A549 (cell line): ENCODE measurements at regions of chr15 and their contacts with region 1.

Region 1: DNA sequence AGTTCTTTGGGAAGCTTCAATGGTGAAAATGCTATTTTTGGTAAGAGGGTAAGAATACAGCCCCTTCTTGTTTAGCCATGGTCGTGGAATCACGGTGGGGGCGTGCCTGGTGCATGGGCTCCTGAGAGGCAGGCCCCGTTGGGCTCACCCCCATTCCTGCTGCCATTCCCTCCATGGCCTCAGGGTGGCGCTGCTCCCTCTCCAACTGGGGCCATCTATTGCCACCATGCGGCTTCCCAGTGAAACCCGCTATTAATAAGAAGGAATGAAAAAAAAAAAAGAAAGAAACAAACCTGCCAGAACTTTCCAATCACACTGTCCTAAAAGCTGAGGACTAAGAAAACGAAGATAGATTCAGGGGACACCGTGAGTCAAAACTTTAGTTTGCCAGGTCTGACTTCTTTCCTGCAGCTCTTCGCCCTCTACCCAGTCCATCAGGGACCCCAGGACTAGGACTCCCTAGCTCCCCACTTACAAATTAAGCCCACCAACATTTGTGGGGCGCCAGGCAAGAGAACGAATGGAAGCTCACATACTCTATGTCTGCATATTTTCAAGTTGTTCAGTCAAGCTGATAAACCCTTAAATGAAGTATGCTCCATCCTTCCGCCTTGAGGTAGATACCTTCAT is 30.6 kb upstream of the ABHD2 start:
- DNase-seq: peak; percentile 80 to 91
- ATAC-seq: peak; percentile 93 to 97
- H3K4me3 ChIP-seq: no peak overlapping the region
- H3K27ac ChIP-seq: peak overlapping the region; percentile 55 to 57; a peak in 5 of 6 replicates
- H3K4me1 ChIP-seq: peaks cover 6% of the 10 kb centered on the region; the same call in 1 of the 3 replicates
- CTCF ChIP-seq: peak; percentile 100
- EP300 ChIP-seq: no peak
- POLR2A ChIP-seq: no peak
- RAD21 ChIP-seq: peak; percentile 100

Region 2: GRCh38 chr15:88638626-88639372 is 418.8 kb before region 1 on chr15 and contains the start of gene ISG20:
- CTCF ChIA-PET with region 1: no interaction called
- POLR2A ChIA-PET with region 1: no interaction called
- DNase-seq: peak; percentile 98 to 100
- ATAC-seq: peak; percentile 80 to 92
- H3K4me3 ChIP-seq: peak within 1 kb of the TSS; percentile 31
- H3K27ac ChIP-seq: peak within 1 kb of the TSS; percentile 87 to 92
- H3K4me1 ChIP-seq: peaks cover 55% of the 10 kb centered on the region
- CTCF ChIP-seq: peak; percentile 44
- EP300 ChIP-seq: peak; percentile 61 to 83; a peak in 3 of 5 replicates
- POLR2A ChIP-seq: no peak
- RAD21 ChIP-seq: peak; percentile 10 to 51; a peak in 4 of 5 replicates
- polyA plus RNA-seq, gene ISG20: 47.4 and 65.8 TPM in 2 replicates

Region 3: GRCh38 chr15:88704791-88705768 is 352.5 kb before region 1 on chr15:
- CTCF ChIA-PET with region 1: no interaction called
- POLR2A ChIA-PET with region 1: no interaction called
- DNase-seq: no peak
- ATAC-seq: peak in 1 of 2 experiments; percentile 15; a peak in 2 of 6 replicates
- H3K4me3 ChIP-seq: peak overlapping the region; percentile 36
- H3K27ac ChIP-seq: peak overlapping the region in 1 of 2 experiments; percentile 61; a peak in 3 of 6 replicates
- H3K4me1 ChIP-seq: no peaks in the 10 kb centered on the region
- CTCF ChIP-seq: no peak
- EP300 ChIP-seq: no peak
- POLR2A ChIP-seq: no peak
- RAD21 ChIP-seq: no peak

Region 4: GRCh38 chr15:88878720-88879184 is 178.9 kb before region 1 on chr15:
- CTCF ChIA-PET with region 1: interaction called, 11 read pairs
- POLR2A ChIA-PET with region 1: no interaction called
- DNase-seq: peak; percentile 68 to 87
- ATAC-seq: peak; percentile 91 to 95
- H3K4me3 ChIP-seq: no peak overlapping the region
- H3K27ac ChIP-seq: no peak overlapping the region
- H3K4me1 ChIP-seq: no peaks in the 10 kb centered on the region
- CTCF ChIP-seq: peak; percentile 78
- EP300 ChIP-seq: no peak
- POLR2A ChIP-seq: no peak
- RAD21 ChIP-seq: peak; percentile 70 to 82

Region 5: GRCh38 chr15:89026167-89026566 is 31.5 kb before region 1 on chr15:
- CTCF ChIA-PET with region 1: interaction called, 24 read pairs
- POLR2A ChIA-PET with region 1: no interaction called
- DNase-seq: no peak
- ATAC-seq: no peak
- H3K4me3 ChIP-seq: no peak overlapping the region
- H3K27ac ChIP-seq: no peak overlapping the region
- H3K4me1 ChIP-seq: no peaks in the 10 kb centered on the region
- CTCF ChIP-seq: no peak
- EP300 ChIP-seq: no peak
- POLR2A ChIP-seq: no peak
- RAD21 ChIP-seq: no peak

Region 6: DNA sequence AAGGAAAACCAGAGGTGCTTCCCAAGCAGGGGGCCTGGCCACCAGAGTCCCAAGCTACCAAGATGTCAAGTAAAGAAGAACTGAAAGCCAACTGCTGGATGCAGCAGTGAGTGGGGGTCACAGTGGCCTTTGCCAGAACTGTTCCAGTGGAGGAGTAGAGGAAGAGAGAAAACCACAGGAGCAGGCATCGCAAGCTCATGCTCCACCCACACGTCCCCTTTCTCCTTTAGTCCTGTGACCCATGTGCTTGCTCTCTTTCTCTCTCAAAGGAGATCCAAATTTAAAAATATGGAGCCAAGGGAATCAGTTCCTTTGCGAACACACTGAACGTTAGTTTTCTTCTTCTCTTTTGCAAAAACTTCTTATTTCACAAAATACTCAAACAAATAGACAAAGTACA is 18.2 kb after region 1 on chr15:
- CTCF ChIA-PET with region 1: interaction called, 47 read pairs
- POLR2A ChIA-PET with region 1: no interaction called
- DNase-seq: no peak
- ATAC-seq: no peak
- H3K4me3 ChIP-seq: no peak overlapping the region
- H3K27ac ChIP-seq: no peak overlapping the region
- H3K4me1 ChIP-seq: 0 out of 3 replicates have a peak, but pooled peaks cover 3% of the 10 kb centered on the region
- CTCF ChIP-seq: no peak
- EP300 ChIP-seq: no peak
- POLR2A ChIP-seq: no peak
- RAD21 ChIP-seq: no peak

Region 7: GRCh38 chr15:89129123-89129815 is 71.7 kb after region 1 on chr15:
- CTCF ChIA-PET with region 1: interaction called, 380 read pairs
- POLR2A ChIA-PET with region 1: no interaction called
- DNase-seq: peak; percentile 63 to 68
- ATAC-seq: peak; percentile 60 to 79; a peak in 3 of 6 replicates
- H3K4me3 ChIP-seq: no peak overlapping the region
- H3K27ac ChIP-seq: peak overlapping the region; percentile 69 to 74
- H3K4me1 ChIP-seq: peaks cover 57% of the 10 kb centered on the region
- CTCF ChIP-seq: peak; percentile 95
- EP300 ChIP-seq: no peak
- POLR2A ChIP-seq: no peak
- RAD21 ChIP-seq: peak; percentile 84 to 86

Region 8: DNA sequence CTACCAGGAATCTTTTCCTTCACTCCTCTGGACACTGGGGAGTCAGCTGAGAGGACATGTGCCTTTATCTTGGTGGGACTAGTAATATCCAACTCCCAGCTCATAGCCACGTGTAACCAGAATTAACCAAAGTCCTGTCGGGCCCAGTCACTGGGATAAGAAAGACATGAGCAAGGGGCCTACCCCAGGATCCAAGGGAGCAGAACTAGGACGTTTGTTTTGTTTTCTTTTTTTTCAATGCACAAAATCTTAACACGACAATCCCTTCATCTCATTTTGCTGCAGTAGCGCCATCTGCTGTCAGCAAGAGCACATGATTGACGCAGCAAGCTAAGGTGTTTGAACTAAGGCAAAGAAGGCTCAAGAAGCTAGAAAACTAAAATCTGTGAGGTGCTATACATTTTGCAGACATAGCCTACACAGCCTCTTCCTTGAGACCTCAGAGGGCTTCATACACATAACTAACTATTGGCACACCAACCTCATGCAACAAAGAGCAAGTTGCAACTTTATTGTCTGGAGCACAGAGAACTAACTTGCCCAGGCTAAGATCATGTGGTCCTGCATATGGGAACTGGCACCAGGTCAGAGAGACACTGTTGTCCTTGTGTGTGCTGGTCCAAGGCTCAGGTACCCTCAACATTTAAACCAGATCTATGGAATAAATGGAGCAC is 120.2 kb after region 1 on chr15:
- CTCF ChIA-PET with region 1: interaction called, 735 read pairs
- POLR2A ChIA-PET with region 1: no interaction called
- DNase-seq: peak; percentile 70 to 82
- ATAC-seq: peak; percentile 83 to 89
- H3K4me3 ChIP-seq: no peak overlapping the region
- H3K27ac ChIP-seq: peak overlapping the region; percentile 10 to 14; a peak in 1 of 6 replicates
- H3K4me1 ChIP-seq: no peaks in the 10 kb centered on the region
- CTCF ChIP-seq: peak; percentile 98
- EP300 ChIP-seq: no peak
- POLR2A ChIP-seq: no peak
- RAD21 ChIP-seq: peak; percentile 94 to 96

Region 9: DNA sequence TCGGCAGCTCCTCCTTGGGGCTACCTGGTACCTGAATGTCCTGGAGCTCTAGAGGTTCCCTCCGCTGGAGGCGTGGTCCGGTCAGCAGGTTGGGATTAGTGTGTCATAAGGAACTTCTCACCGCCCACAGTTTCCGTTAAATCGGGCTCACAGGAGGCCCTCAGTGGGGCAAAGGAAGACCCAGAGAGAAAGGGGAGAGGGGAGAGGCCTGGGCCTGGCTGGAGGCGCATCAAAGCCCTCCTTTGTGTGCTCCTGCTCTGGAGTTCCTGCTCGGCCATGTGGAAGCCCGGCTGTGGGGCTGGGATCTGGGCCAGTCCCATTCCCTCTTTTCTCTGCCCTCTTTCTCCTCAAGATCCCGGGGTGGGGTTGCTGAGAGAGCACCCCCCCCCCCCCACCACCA is 163.9 kb after region 1 on chr15 and contains the start of gene RLBP1:
- CTCF ChIA-PET with region 1: interaction called, 10 read pairs
- POLR2A ChIA-PET with region 1: no interaction called
- DNase-seq: no peak
- ATAC-seq: no peak
- H3K4me3 ChIP-seq: no peak within 1 kb of the TSS
- H3K27ac ChIP-seq: no peak within 1 kb of the TSS
- H3K4me1 ChIP-seq: no peaks in the 10 kb centered on the region
- CTCF ChIP-seq: no peak
- EP300 ChIP-seq: no peak
- POLR2A ChIP-seq: no peak
- RAD21 ChIP-seq: no peak
- polyA plus RNA-seq, gene RLBP1: not detected in 2 replicates